H1 (cell line): ENCODE measurements at regions of chr1 and their contacts with region 1.

Region 1: GRCh38 chr1:209248649-209249279 is 334.8 kb upstream of the CAMK1G start:
- DNase-seq: peak in 1 of 2 experiments; percentile 83
- H3K4me3 ChIP-seq: no peak overlapping the region
- H3K27ac ChIP-seq: no peak overlapping the region
- H3K4me1 ChIP-seq: peaks cover 0 to 16% (median 5%) of the 10 kb centered on the region in 4 experiments; a peak in 4 of 7 replicates
- H3K27me3 ChIP-seq: no peaks in the 10 kb centered on the region
- CTCF ChIP-seq: peak in 2 of 3 experiments; percentile 83 to 90; a peak in 3 of 4 replicates
- EP300 ChIP-seq: no peak
- POLR2A ChIP-seq: no peak
- RAD21 ChIP-seq: peak; percentile 86 to 91

Region 2: GRCh38 chr1:208682664-208683013 is 566.1 kb before region 1 on chr1:
- CTCF ChIA-PET with region 1: no interaction called
- POLR2A ChIA-PET with region 1: no interaction called
- DNase-seq: no peak
- H3K4me3 ChIP-seq: no peak overlapping the region
- H3K27ac ChIP-seq: no peak overlapping the region
- H3K4me1 ChIP-seq: no peaks in the 10 kb centered on the region
- H3K27me3 ChIP-seq: no peaks in the 10 kb centered on the region
- CTCF ChIP-seq: no peak
- EP300 ChIP-seq: no peak
- POLR2A ChIP-seq: no peak
- RAD21 ChIP-seq: no peak

Region 3: DNA sequence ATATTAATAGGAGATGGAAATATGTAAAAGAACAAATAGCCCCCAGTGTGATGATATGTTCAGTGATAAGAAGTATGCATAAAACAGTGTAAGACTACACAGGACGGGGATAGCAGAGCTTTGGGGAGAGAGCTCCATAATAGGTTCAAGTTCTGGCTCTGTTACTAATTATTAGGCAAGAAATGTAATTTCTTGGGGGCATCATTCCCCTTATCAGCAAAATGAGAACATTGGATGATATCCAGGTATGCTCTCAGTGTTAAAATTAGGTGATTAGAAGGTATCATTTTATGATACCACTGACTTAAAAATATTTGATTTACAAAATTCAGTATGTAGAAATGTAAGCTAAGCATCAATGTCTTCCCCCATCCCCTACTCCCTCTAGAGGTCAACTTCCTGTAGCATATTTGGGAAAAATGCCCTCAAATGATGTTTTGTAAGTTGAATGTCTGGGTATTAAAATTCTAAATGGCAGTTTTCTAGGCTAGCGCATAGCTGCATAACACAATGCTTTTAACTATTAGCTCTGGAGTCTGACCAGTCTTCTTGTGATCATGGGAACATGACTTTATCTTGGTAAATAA is 250.9 kb before region 1 on chr1:
- CTCF ChIA-PET with region 1: no interaction called
- POLR2A ChIA-PET with region 1: no interaction called
- DNase-seq: no peak
- H3K4me3 ChIP-seq: no peak overlapping the region
- H3K27ac ChIP-seq: no peak overlapping the region
- H3K4me1 ChIP-seq: no peaks in the 10 kb centered on the region
- H3K27me3 ChIP-seq: no peaks in the 10 kb centered on the region
- CTCF ChIP-seq: peak in 1 of 3 experiments; percentile 38; a peak in 2 of 4 replicates
- EP300 ChIP-seq: no peak
- POLR2A ChIP-seq: no peak
- RAD21 ChIP-seq: peak; percentile 39 to 44; a peak in 3 of 4 replicates

Region 4: GRCh38 chr1:209238356-209238755 is 10.4 kb before region 1 on chr1:
- CTCF ChIA-PET with region 1: interaction called, 37 read pairs
- POLR2A ChIA-PET with region 1: no interaction called
- DNase-seq: no peak
- H3K4me3 ChIP-seq: no peak overlapping the region
- H3K27ac ChIP-seq: no peak overlapping the region
- H3K4me1 ChIP-seq: no peaks in the 10 kb centered on the region
- H3K27me3 ChIP-seq: no peaks in the 10 kb centered on the region
- CTCF ChIP-seq: no peak
- EP300 ChIP-seq: no peak
- POLR2A ChIP-seq: no peak
- RAD21 ChIP-seq: no peak

Region 5: GRCh38 chr1:209335178-209335577 is 86.4 kb after region 1 on chr1:
- CTCF ChIA-PET with region 1: interaction called, 14 read pairs
- POLR2A ChIA-PET with region 1: no interaction called
- DNase-seq: peak in 1 of 2 experiments; percentile 33
- H3K4me3 ChIP-seq: no peak overlapping the region
- H3K27ac ChIP-seq: no peak overlapping the region
- H3K4me1 ChIP-seq: peaks cover 0 to 3% (median 0%) of the 10 kb centered on the region in 4 experiments; a peak in 1 of 7 replicates
- H3K27me3 ChIP-seq: no peaks in the 10 kb centered on the region
- CTCF ChIP-seq: peak; percentile 67 to 93 (median 88)
- EP300 ChIP-seq: no peak
- POLR2A ChIP-seq: no peak
- RAD21 ChIP-seq: peak; percentile 59 to 69; a peak in 3 of 4 replicates

Region 6: GRCh38 chr1:209435654-209436566 is 187.1 kb after region 1 on chr1:
- CTCF ChIA-PET with region 1: interaction called, 38 read pairs
- POLR2A ChIA-PET with region 1: no interaction called
- DNase-seq: peak; percentile 75 to 97
- H3K4me3 ChIP-seq: no peak overlapping the region
- H3K27ac ChIP-seq: no peak overlapping the region
- H3K4me1 ChIP-seq: peaks cover 8 to 29% (median 25%) of the 10 kb centered on the region in 4 experiments
- H3K27me3 ChIP-seq: no peaks in the 10 kb centered on the region
- CTCF ChIP-seq: peak; percentile 92 to 93 (median 93)
- EP300 ChIP-seq: 0 out of 3 replicates have a peak, but pooled peaks of 1 of the 2 experiments have one; percentile 14
- POLR2A ChIP-seq: no peak
- RAD21 ChIP-seq: peak; percentile 99

Region 7: GRCh38 chr1:209527993-209528392 is 279.2 kb after region 1 on chr1:
- CTCF ChIA-PET with region 1: no interaction called
- POLR2A ChIA-PET with region 1: no interaction called
- DNase-seq: no peak
- H3K4me3 ChIP-seq: no peak overlapping the region
- H3K27ac ChIP-seq: no peak overlapping the region
- H3K4me1 ChIP-seq: no peaks in the 10 kb centered on the region
- H3K27me3 ChIP-seq: no peaks in the 10 kb centered on the region; a peak in 1 of 7 replicates
- CTCF ChIP-seq: no peak
- EP300 ChIP-seq: no peak
- POLR2A ChIP-seq: no peak
- RAD21 ChIP-seq: no peak